GM18951 (cell line): ENCODE measurements at regions of chr12 and their contacts with region 1.

Region 1: DNA sequence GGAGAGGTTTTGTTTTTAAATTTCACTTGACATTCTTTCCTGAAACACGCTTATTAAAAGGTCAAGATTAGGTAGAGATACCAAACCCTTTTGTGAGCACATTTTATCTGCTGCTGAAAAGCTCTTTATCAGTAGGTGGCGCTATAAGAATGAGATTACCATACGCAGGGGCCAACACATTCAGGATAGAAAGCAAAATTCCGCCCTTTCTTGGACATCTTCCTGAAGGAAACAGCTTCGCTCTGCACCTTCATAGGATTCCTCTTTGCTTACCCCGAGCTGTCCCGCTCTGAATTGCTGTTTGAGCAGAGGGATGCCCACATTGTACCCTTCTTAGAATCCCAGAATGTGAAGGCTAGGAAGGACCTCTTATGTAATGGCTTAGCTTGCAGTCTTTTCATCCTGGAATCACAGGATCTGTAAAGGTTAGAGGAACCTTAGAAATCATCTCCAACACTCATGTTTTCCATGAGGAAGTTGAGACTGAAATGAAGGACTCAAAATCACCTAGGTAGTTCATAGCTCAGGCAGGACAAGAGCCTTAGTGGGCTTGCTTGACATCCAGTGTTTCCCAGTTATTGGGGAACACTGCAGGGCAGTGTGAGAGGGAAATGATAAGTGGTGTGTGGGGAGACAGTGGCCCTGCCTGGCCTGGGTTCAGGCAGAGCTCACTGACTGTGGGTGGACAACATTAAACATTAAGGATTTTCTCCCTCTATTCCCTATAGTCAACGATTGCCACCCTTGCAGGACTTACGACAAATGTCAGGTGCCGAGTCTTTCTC is 38.7 kb upstream of the CRY1 start:
- POLR2A ChIP-seq: no peak

Region 2: GRCh38 chr12:107441665-107442300 is 309.8 kb after region 1 on chr12:
- in situ Hi-C with region 1: no loop called
- POLR2A ChIP-seq: no peak

Region 3: DNA sequence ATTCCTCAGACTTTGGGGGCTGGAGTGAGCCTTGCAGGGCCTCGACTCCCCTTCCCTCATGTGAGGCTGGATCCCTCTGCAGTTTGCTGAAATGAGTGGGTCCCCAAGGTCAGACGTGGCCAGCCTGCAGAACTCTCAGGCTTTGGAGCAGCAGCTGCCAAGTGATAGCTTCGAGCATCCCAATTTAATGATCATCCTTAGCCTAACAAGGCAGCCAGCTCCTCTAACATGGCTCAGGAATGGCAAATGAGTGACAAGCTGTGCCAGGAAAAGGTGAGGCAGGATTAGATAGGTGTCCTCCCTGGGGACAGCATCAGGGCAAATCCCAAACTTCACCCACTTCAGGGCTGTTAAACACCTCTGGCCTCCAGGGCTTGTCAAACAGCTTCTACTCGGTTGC is 422.9 kb after region 1 on chr12:
- in situ Hi-C with region 1: no loop called
- POLR2A ChIP-seq: no peak

Region 4: GRCh38 chr12:107607464-107608392 is 475.7 kb after region 1 on chr12:
- in situ Hi-C with region 1: loop called (anchors 10 kb)
- POLR2A ChIP-seq: no peak